HCT116 (cell line): ENCODE measurements at regions of chr1 and their contacts with region 1.

Region 1: DNA sequence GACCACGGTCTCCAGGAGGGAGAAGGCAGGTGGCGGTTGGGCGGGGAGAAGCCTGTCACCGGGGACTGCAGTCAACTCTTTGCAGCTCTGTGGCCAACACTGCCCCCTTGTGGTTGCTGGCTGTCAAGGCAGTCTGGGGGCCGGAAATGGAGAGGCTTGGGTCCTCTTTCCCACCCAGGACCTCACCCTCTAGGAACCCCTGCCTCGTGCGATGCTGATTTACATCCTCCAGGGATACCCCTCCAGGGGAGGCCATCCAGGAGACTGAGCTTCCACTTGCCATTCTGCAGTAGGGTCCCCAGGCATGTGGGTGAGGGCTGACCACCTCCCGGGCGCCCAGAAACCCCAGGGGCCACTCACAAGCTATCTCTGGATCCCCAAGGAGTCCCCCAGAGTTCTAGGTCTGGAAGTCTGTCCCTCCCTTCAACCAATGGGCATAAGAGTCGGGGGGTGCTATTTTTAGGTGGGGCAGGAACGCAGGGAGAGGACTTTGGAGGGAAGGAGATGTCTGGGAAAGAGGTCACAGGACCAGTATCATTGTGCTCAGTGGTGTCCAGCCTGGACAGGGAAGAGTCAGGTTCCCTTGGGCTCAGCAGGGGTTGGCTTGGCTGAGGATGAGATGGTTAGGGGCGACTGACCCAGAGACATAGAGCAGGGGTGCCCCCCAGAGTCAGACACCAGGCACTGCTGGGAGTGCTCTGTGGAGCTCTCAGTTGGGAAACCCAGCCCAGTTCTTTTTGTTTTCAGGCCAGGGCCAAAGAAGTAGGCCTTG is 7.1 kb upstream of the GPR61 start:
- DNase-seq: peak; percentile 47
- ATAC-seq: peak; percentile 92
- H3K4me3 ChIP-seq: no peak overlapping the region
- H3K27ac ChIP-seq: peak overlapping the region; percentile 21; the same call in 1 of the 2 replicates
- H3K4me1 ChIP-seq: peaks cover 4 to 14% of the 10 kb centered on the region in 2 experiments; a peak in 3 of 4 replicates
- H3K27me3 ChIP-seq: no peaks in the 10 kb centered on the region; the same call in 1 of the 2 replicates
- CTCF ChIP-seq: peak; percentile 85 to 97 (median 93)
- POLR2A ChIP-seq: no peak
- RAD21 ChIP-seq: peak; percentile 91

Region 2: GRCh38 chr1:109263597-109264398 is 268.8 kb before region 1 on chr1:
- CTCF ChIA-PET with region 1: interaction called, 7 read pairs
- POLR2A ChIA-PET with region 1: no interaction called
- RAD21 ChIA-PET with region 1: no interaction called
- intact Hi-C with region 1: loop called (anchors 2 kb)
- DNase-seq: peak; percentile 88
- ATAC-seq: peak; percentile 96
- H3K4me3 ChIP-seq: no peak overlapping the region
- H3K27ac ChIP-seq: peak overlapping the region; percentile 2; the same call in 1 of the 2 replicates
- H3K4me1 ChIP-seq: peaks cover 0 to 9% of the 10 kb centered on the region in 2 experiments; a peak in 2 of 4 replicates
- H3K27me3 ChIP-seq: no peaks in the 10 kb centered on the region
- CTCF ChIP-seq: peak; percentile 99 to 100 (median 99)
- POLR2A ChIP-seq: no peak
- RAD21 ChIP-seq: peak; percentile 96

Region 3: GRCh38 chr1:109397538-109398342 is 134.8 kb before region 1 on chr1 and contains the start of gene SORT1:
- CTCF ChIA-PET with region 1: interaction called, 18 read pairs
- POLR2A ChIA-PET with region 1: no interaction called
- RAD21 ChIA-PET with region 1: no interaction called
- intact Hi-C with region 1: loop called (anchors 5 kb)
- DNase-seq: peak; percentile 74
- ATAC-seq: peak; percentile 98
- H3K4me3 ChIP-seq: peak within 1 kb of the TSS; percentile 45 to 62
- H3K27ac ChIP-seq: no peak within 1 kb of the TSS; the same call in 1 of the 2 replicates
- H3K4me1 ChIP-seq: peaks cover 11 to 21% of the 10 kb centered on the region in 2 experiments
- H3K27me3 ChIP-seq: no peaks in the 10 kb centered on the region; the same call in 1 of the 2 replicates
- CTCF ChIP-seq: no peak
- POLR2A ChIP-seq: no peak
- RAD21 ChIP-seq: no peak
- total RNA-seq, gene SORT1: 20.2 TPM

Region 4: GRCh38 chr1:109493805-109494539 is 38.6 kb before region 1 on chr1 and contains the start of gene CYB561D1:
- CTCF ChIA-PET with region 1: interaction called, 146 read pairs
- POLR2A ChIA-PET with region 1: interaction called, 4 read pairs
- RAD21 ChIA-PET with region 1: interaction called, 6 to 17 read pairs
- intact Hi-C with region 1: loop called (anchors 1 kb)
- DNase-seq: peak; percentile 53
- ATAC-seq: peak; percentile 92
- H3K4me3 ChIP-seq: peak within 1 kb of the TSS; percentile 90 to 94
- H3K27ac ChIP-seq: peak within 1 kb of the TSS; percentile 61
- H3K4me1 ChIP-seq: peaks cover 10 to 14% of the 10 kb centered on the region in 2 experiments; a peak in 2 of 4 replicates
- H3K27me3 ChIP-seq: no peaks in the 10 kb centered on the region
- CTCF ChIP-seq: peak; percentile 77 to 98 (median 85)
- POLR2A ChIP-seq: peak; percentile 68
- RAD21 ChIP-seq: peak; percentile 49
- total RNA-seq, gene CYB561D1: 5.9 TPM

Region 5: GRCh38 chr1:109548321-109549267 is 16.0 kb after region 1 on chr1 and contains the start of gene GNAI3:
- CTCF ChIA-PET with region 1: interaction called, 12 read pairs
- POLR2A ChIA-PET with region 1: interaction called, 6 read pairs
- RAD21 ChIA-PET with region 1: interaction called in 1 of 2 experiments, 3 read pairs
- intact Hi-C with region 1: no loop called
- DNase-seq: peak; percentile 92
- ATAC-seq: peak; percentile 91
- H3K4me3 ChIP-seq: peak within 1 kb of the TSS; percentile 86 to 98
- H3K27ac ChIP-seq: peak within 1 kb of the TSS; percentile 70
- H3K4me1 ChIP-seq: peaks cover 15 to 24% of the 10 kb centered on the region in 2 experiments
- H3K27me3 ChIP-seq: no peaks in the 10 kb centered on the region
- CTCF ChIP-seq: no peak
- POLR2A ChIP-seq: peak; percentile 95
- RAD21 ChIP-seq: no peak
- total RNA-seq, gene GNAI3: 9.5 TPM

Region 6: GRCh38 chr1:109691762-109692161 is 159.2 kb after region 1 on chr1:
- CTCF ChIA-PET with region 1: no interaction called
- POLR2A ChIA-PET with region 1: no interaction called
- RAD21 ChIA-PET with region 1: no interaction called
- intact Hi-C with region 1: no loop called
- DNase-seq: no peak
- ATAC-seq: no peak
- H3K4me3 ChIP-seq: no peak overlapping the region
- H3K27ac ChIP-seq: no peak overlapping the region
- H3K4me1 ChIP-seq: no peaks in the 10 kb centered on the region
- H3K27me3 ChIP-seq: no peaks in the 10 kb centered on the region
- CTCF ChIP-seq: no peak
- POLR2A ChIP-seq: no peak
- RAD21 ChIP-seq: no peak